Activated CD4-positive, alpha-beta memory T cell treated with anti-CD3 and anti-CD28 coated beads for 36 hours (primary cell): ENCODE measurements at regions of chr1 and their contacts with region 1.

Region 1: GRCh38 chr1:117051224-117052064 is 8.7 kb upstream of the TTF2 start:
- DNase-seq: peak; percentile 67
- H3K4me3 Mint-ChIP-seq: peak overlapping the region; percentile 55
- H3K27ac Mint-ChIP-seq: peak overlapping the region; percentile 26
- H3K4me1 Mint-ChIP-seq: peaks cover 30% of the 10 kb centered on the region
- H3K27me3 Mint-ChIP-seq: no peaks in the 10 kb centered on the region

Region 2: DNA sequence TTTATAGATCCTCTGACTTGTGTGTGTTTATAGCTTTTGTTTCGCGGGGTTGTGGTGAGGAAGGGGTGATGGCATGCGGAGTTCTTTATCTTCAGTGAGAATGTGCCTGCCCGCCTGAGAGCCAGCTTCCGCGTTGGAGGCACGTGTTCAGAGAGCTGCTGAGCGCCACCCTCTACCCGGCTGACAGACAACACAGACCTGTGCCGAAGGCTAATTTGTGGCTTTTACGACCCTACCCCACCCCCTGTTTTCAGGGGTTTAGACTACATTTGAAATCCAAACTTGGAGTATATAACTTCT is 64.2 kb before region 1 on chr1:
- CTCF ChIA-PET with region 1: no interaction called
- POLR2A ChIA-PET with region 1: no interaction called
- intact Hi-C with region 1: loop called (anchors 2 kb)
- DNase-seq: peak; percentile 78
- H3K4me3 Mint-ChIP-seq: peak overlapping the region; percentile 76
- H3K27ac Mint-ChIP-seq: peak overlapping the region; percentile 90
- H3K4me1 Mint-ChIP-seq: peaks cover 28% of the 10 kb centered on the region
- H3K27me3 Mint-ChIP-seq: no peaks in the 10 kb centered on the region

Region 3: GRCh38 chr1:118185084-118185832 is 1133.8 kb after region 1 on chr1 and contains the start of gene SPAG17:
- CTCF ChIA-PET with region 1: no interaction called
- POLR2A ChIA-PET with region 1: no interaction called
- intact Hi-C with region 1: no loop called
- DNase-seq: peak; percentile 16
- H3K4me3 Mint-ChIP-seq: no peak within 1 kb of the TSS
- H3K27ac Mint-ChIP-seq: no peak within 1 kb of the TSS
- H3K4me1 Mint-ChIP-seq: peaks cover 4% of the 10 kb centered on the region
- H3K27me3 Mint-ChIP-seq: peaks cover 12% of the 10 kb centered on the region
- total RNA-seq, gene SPAG17: not detected